ENCODE measurements at regions of chr15 and their contacts with region 1.

Region 1: DNA sequence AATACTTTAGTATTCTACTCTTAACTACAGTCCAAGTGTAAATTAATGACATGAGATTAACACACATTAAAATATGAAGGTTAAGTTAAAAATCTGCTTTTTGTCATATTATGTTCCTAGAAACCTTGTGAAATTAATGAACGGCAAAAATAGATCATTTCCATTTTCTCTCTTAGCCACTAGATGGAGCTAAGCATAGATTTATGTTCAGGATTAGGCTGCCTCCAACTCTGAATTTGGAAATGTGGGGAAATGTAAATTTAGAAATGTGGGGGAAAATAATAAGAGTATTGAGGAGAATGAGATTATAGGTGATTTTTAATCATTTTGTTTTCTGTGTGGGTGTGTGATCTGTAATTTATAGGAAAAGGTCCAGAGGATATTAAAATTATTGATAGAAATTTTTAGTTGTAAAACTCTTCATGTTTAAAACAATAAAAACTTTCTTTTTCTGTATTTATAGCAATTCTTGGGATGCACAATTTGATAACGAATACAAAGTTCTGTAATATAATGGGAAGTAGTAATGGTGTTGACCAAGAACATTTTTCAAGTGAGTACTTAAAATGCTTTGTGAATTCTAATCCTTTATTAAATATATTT is 59.2 kb downstream of the TMOD3 start:
- DNase-seq: no peak
- ATAC-seq: no peak
- H3K4me3 Mint-ChIP-seq: no peak overlapping the region
- H3K27ac Mint-ChIP-seq: no peak overlapping the region
- H3K4me1 Mint-ChIP-seq: peaks cover 6% of the 10 kb centered on the region
- H3K27me3 Mint-ChIP-seq: no peaks in the 10 kb centered on the region

Region 2: DNA sequence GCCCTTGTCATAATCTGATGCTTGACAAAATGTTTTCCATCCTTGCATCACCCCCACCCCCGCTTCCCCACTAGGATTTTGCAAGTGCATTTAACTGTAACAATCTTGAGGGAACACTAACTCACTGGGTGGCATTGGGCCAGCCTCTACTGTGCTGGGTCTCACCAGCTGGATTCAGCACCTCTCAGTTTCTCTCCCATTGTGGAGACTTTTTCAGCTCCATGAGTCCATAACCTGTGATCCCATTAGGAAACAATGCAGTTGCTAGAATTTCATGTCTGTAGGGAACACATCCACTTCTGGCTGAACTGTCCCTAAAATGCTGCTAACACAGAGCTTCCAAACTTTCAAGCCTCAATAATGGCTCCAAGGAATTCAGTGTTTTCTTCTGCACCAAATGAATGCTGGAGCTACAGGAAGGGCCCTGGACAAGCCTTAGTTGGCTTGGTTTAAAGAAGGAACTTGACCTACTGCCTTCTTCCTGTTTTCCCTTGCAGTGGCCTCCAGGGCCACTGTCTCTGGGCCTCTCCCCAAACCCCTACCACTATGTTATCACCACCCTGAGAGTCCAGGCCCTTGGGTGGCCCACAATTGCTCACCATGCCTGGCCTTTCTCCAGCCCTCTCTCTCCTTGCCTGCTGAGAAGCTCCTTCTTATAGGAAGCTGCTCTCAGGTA is 565.9 kb before region 1 on chr15:
- CTCF ChIA-PET with region 1: no interaction called
- POLR2A ChIA-PET with region 1: no interaction called
- DNase-seq: no peak
- ATAC-seq: no peak
- H3K4me3 Mint-ChIP-seq: no peak overlapping the region
- H3K27ac Mint-ChIP-seq: no peak overlapping the region
- H3K4me1 Mint-ChIP-seq: no peaks in the 10 kb centered on the region
- H3K27me3 Mint-ChIP-seq: peaks cover 8% of the 10 kb centered on the region

Region 3: DNA sequence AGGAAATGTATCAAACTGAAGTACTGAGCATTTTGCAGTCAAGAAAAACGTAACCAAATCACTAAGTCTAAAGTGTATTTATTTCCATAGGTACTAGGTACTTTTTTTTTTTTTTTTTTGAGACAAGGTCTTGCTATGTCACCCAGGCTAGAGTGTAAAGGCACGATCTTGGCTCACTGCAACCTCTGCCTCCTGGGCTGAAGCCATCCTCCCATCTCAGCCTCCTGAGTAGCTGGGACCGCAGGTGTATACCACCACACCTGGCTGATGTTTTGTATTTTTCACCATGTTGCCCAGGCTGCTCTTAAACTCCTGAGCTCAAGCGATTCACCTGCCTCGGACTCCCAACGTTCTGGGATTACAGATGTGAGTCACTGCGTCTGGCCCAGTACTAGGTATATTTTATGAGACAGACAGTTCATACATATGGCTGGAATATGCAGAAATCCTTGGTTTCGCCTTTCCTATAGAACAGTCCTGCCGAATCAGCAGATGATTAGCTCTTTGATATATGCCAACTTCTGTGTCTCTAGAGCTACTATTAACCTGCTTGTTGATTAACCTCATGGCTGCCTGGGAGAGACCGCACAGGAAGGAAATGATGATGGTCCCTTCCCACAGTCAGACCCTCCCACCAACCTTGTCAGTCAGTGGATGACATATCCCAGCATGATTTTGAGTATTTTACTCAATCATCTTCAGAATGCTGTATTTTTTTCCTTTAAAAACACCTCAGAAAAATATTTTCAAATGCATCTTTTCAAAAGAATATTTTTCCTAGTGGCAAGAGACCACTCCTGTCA is 26.9 kb before region 1 on chr15:
- CTCF ChIA-PET with region 1: interaction called, 12 read pairs
- POLR2A ChIA-PET with region 1: no interaction called
- DNase-seq: peak; percentile 82
- ATAC-seq: peak; percentile 94
- H3K4me3 Mint-ChIP-seq: peak overlapping the region; percentile 48
- H3K27ac Mint-ChIP-seq: peak overlapping the region; percentile 68
- H3K4me1 Mint-ChIP-seq: peaks cover 47% of the 10 kb centered on the region
- H3K27me3 Mint-ChIP-seq: no peaks in the 10 kb centered on the region

Region 4: DNA sequence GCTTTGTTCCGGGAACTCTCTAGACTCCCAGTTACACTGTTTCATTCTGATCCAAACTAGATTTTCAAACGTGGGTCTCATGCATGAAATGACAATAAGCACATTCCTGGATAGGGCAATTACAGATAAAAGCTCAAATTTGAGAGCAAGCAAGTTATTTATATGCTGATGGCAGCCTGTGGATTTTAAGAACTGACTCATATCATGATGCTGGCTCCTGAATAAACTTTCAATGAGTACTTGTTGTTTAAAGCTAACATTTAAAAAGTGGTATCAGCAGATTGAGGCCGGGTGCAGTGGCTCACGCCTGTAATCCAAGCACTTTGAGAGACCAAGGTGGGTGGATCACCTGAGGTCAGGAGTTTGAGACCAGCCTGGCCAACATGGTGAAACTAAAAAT is 16.2 kb after region 1 on chr15:
- CTCF ChIA-PET with region 1: interaction called, 21 read pairs
- POLR2A ChIA-PET with region 1: no interaction called
- DNase-seq: no peak
- ATAC-seq: no peak
- H3K4me3 Mint-ChIP-seq: no peak overlapping the region
- H3K27ac Mint-ChIP-seq: no peak overlapping the region
- H3K4me1 Mint-ChIP-seq: no peaks in the 10 kb centered on the region
- H3K27me3 Mint-ChIP-seq: no peaks in the 10 kb centered on the region